Right ventricle myocardium superior (tissue), 1 donor: ENCODE measurements at regions of chr2 and their contacts with region 1.

Region 1: DNA sequence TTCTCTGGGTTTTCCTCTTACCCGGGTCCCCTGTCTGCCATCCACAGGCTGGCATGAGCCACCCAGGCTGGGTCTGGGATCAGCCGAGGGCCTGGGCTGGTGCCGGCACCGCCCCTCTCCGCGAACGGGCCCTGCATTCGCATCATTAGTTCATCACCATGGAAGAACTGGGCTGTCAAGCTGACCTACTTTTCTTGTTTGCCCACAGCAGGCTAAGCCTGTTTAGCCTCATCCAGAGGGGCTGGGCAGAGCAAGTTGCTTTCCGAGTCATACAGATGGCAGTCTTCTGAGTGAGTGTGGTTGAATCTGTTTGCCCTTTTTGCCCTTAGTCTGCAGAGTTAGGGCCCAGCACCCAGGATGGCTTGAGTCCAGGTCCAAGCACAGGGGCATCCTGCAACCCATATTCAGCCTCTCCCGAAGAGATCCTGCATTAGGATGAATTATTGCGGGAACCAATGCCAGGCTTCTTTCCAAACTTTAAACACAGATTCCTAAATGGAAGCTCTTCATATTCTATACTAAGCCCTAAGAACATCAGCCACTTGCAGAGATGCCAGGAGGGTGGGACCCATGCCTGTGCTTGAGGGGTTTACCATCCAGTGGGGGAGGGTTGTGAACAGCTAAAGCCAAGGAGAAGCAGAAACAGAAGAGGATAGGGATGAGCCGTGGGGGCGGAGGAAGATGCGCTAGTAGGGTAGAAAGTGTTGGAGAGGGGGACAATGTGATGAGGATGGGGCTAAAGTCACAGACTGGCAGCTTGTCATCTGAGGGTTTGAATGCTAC is 68.0 kb downstream of the NPAS2 start:
- DNase-seq: no peak
- ATAC-seq: no peak

Region 2: GRCh38 chr2:100606726-100607343 is 281.1 kb before region 1 on chr2:
- intact Hi-C with region 1: no loop called
- DNase-seq: no peak
- ATAC-seq: peak; percentile 54

Region 3: DNA sequence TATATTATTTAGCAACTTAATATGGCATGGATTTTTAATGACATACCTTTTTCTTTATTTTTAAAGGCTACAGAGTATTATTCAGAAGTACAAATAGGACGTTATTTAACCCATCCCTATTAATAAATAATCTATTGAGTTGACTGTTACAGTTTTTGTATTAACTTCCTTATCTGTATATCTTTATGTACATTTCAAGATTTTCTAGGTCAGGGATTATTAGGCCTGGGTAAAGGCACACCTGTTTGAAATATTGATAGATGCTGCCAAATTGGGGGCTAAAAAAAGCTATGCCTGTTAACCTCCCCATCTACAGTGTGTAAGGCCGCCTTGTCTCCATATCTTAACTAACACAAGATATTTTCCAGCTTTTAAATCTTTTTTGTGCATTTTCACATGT is 61.4 kb before region 1 on chr2:
- intact Hi-C with region 1: loop called (anchors 5 kb)
- DNase-seq: no peak
- ATAC-seq: no peak

Region 4: GRCh38 chr2:101160454-101160853 is 272.6 kb after region 1 on chr2:
- intact Hi-C with region 1: no loop called
- DNase-seq: no peak
- ATAC-seq: peak; percentile 60